CD14-positive monocyte (primary cell): ENCODE measurements at regions of chr17 and their contacts with region 1.

Region 1: DNA sequence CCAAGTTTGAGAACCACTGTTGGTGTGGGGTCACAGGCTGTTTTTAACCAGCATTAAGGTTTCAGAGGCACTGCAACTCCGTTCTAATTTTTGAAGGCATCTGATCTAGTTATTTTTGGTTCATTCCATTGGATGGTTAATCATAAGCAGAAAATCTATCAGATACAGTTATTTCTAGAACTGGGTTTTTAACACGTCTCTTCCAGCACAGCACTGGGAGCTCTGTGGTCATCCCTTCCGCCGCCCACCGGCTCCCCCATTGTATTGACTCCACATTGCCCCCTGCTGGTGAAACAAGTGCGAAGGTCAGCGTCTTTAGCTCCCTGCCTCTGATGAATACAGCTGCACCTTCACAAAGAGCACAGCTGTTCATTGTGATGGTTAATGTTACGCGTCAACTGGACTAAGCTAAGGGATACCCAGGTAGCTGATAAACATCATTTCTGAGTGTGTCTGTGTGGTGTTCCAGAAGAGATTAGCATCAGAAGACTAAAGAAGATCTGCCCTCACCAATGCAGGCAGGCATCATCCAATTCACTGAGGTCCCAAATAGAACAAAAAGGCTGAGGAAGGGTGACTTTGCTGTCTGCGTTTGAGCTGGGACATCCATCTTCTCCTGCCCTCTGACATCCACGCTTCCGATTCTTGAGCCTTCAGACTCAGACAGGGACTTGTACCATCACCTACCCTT is 8.5 kb downstream of the CCL18 start:
- DNase-seq: peak; percentile 39 to 74 (median 58)
- H3K4me3 ChIP-seq: no peak overlapping the region
- H3K4me3 Mint-ChIP-seq: no peak overlapping the region
- H3K27ac ChIP-seq: no peak overlapping the region
- H3K27ac Mint-ChIP-seq: peak overlapping the region in 1 of 7 donors; percentile 11
- H3K4me1 ChIP-seq: peaks cover 6 to 7% of the 10 kb centered on the region in 2 donors
- H3K4me1 Mint-ChIP-seq: peaks cover 14% of the 10 kb centered on the region
- H3K27me3 ChIP-seq: no peaks in the 10 kb centered on the region
- H3K27me3 Mint-ChIP-seq: peaks cover 0 to 4% (median 0%) of the 10 kb centered on the region in 3 donors
- CTCF ChIP-seq: peak; percentile 92

Region 2: GRCh38 chr17:35981908-35982330 is 90.7 kb before region 1 on chr17:
- intact Hi-C with region 1: loop called (anchors 5 to 10 kb)
- DNase-seq: no peak
- H3K4me3 ChIP-seq: no peak overlapping the region
- H3K4me3 Mint-ChIP-seq: no peak overlapping the region
- H3K27ac ChIP-seq: no peak overlapping the region
- H3K27ac Mint-ChIP-seq: no peak overlapping the region
- H3K4me1 ChIP-seq: no peaks in the 10 kb centered on the region
- H3K4me1 Mint-ChIP-seq: no peaks in the 10 kb centered on the region
- H3K27me3 ChIP-seq: no peaks in the 10 kb centered on the region
- H3K27me3 Mint-ChIP-seq: peaks cover 0 to 3% (median 0%) of the 10 kb centered on the region in 3 donors
- CTCF ChIP-seq: no peak

Region 3: DNA sequence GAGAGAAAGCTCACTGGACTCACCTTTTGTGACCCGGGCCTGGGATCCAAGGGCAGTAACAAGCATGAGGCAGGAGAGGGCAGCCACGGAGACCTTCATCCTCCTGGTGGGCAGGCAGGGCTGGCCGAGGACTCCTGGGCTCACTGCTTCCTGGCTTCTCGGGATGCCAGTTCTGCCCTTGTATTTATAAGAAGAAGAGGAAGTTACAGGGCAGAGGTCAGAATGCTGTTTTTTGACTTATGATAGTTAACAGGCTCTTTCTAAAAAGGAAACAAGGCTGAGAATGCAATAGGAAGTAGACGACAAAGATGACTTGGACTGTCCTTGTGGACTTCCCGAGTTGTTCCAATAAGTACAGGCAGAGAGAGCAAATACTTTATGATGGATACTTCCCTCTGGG is 54.8 kb before region 1 on chr17 and contains the start of gene CCL23:
- intact Hi-C with region 1: loop called in 1 of 2 experiments (anchors 10 kb)
- DNase-seq: peak; percentile 46 to 75 (median 72)
- H3K4me3 ChIP-seq: peak within 1 kb of the TSS in 1 of 3 experiments; percentile 8
- H3K4me3 Mint-ChIP-seq: peak within 1 kb of the TSS in 1 of 2 donors; percentile 54
- H3K27ac ChIP-seq: peak within 1 kb of the TSS; percentile 35 to 55
- H3K27ac Mint-ChIP-seq: peak within 1 kb of the TSS; percentile 51 to 87 (median 72)
- H3K4me1 ChIP-seq: peaks cover 20 to 23% of the 10 kb centered on the region in 2 donors
- H3K4me1 Mint-ChIP-seq: peaks cover 27% of the 10 kb centered on the region
- H3K27me3 ChIP-seq: no peaks in the 10 kb centered on the region
- H3K27me3 Mint-ChIP-seq: no peaks in the 10 kb centered on the region
- CTCF ChIP-seq: no peak
- polyA plus RNA-seq, gene CCL23: 0.31 to 0.89 TPM in 2 of 3 donors, not detected in the other

Region 4: GRCh38 chr17:36148559-36149295 is 76.2 kb after region 1 on chr17:
- intact Hi-C with region 1: loop called in 1 of 2 experiments (anchors 5 kb)
- DNase-seq: peak; percentile 59 to 80 (median 74)
- H3K4me3 ChIP-seq: peak overlapping the region in 1 of 3 experiments; percentile 40
- H3K4me3 Mint-ChIP-seq: peak overlapping the region; percentile 17 to 63
- H3K27ac ChIP-seq: no peak overlapping the region
- H3K27ac Mint-ChIP-seq: no peak overlapping the region
- H3K4me1 ChIP-seq: peaks cover 8 to 10% of the 10 kb centered on the region in 2 donors
- H3K4me1 Mint-ChIP-seq: peaks cover 9% of the 10 kb centered on the region
- H3K27me3 ChIP-seq: no peaks in the 10 kb centered on the region
- H3K27me3 Mint-ChIP-seq: peaks cover 0 to 6% (median 2%) of the 10 kb centered on the region in 3 donors
- CTCF ChIP-seq: peak; percentile 99